ENCODE measurements at regions of chr7 and their contacts with region 1.

Region 1: GRCh38 chr7:86939197-86939814 is 120.1 kb downstream of the ELAPOR2 start:
- DNase-seq: peak in 3 of 6 donors; percentile 34 to 62 (median 38)
- ATAC-seq: peak; percentile 68 to 90 (median 90)
- H3K4me3 ChIP-seq: no peak overlapping the region
- H3K27ac ChIP-seq: no peak overlapping the region
- H3K4me1 ChIP-seq: no peaks in the 10 kb centered on the region
- H3K27me3 ChIP-seq: no peaks in the 10 kb centered on the region
- CTCF ChIP-seq: peak; percentile 20 to 65 (median 48)

Region 2: DNA sequence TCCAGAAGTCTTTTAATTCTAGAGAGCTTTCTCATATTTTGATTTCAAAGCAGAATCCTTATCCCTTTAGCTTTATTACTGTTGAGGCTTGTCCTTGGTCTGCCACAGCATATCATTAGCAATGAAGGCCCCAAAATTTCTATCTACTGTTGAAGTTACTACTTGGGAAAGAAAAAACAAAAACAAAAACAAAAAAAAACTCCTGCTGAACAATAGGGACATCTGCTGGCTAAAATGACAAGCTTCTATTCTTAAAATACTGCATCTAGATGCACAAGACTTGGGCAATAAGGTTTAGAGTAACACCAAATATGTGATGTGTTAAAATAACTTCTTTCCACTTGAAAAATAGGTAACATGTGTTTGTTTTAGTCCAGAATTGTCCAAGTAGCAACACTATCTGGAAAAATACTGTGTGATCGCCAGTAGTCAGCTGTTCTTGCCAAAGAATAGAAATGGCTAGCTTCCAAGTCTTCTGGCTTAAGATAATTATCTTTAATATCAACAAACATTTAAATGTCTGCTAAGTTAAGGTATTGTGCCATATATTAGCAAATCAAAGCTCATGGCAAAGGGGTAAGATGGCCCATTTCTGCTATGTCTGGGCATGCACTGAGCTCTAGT is 209.1 kb after region 1 on chr7:
- intact Hi-C with region 1: loop called (anchors 10 kb)
- DNase-seq: no peak
- ATAC-seq: no peak
- H3K4me3 ChIP-seq: no peak overlapping the region
- H3K27ac ChIP-seq: no peak overlapping the region
- H3K4me1 ChIP-seq: peaks cover 0 to 8% (median 0%) of the 10 kb centered on the region in 3 donors
- H3K27me3 ChIP-seq: no peaks in the 10 kb centered on the region
- CTCF ChIP-seq: peak in 1 of 4 donors; percentile 26

Region 3: DNA sequence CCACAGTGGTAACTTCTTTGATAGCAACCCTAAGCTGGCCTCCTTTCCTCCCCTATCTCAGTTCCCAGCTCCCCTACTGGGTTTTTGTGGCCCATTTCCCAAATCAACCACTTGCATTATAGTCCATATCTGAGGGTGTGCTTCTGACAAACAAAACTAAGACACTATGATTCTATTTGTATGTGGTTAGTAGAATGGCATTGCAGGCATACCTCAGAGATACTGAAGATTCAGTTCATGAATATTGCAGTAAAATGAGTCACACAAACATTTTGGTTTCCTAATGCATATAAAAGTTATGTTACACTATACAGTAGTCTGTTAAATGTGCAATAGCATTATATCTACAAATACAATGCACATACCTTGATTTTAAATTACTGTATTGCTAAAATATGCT is 295.6 kb after region 1 on chr7:
- intact Hi-C with region 1: loop called in 1 of 3 experiments (anchors 5 kb)
- DNase-seq: no peak
- ATAC-seq: no peak
- H3K4me3 ChIP-seq: no peak overlapping the region
- H3K27ac ChIP-seq: no peak overlapping the region
- H3K4me1 ChIP-seq: peaks cover 5 to 9% (median 9%) of the 10 kb centered on the region in 3 donors
- H3K27me3 ChIP-seq: peaks cover 0 to 8% (median 0%) of the 10 kb centered on the region in 4 donors
- CTCF ChIP-seq: no peak

Measured in pancreas (tissue), 10 donors.